ENCODE measurements at regions of chr15 and their contacts with region 1.

Region 1: DNA sequence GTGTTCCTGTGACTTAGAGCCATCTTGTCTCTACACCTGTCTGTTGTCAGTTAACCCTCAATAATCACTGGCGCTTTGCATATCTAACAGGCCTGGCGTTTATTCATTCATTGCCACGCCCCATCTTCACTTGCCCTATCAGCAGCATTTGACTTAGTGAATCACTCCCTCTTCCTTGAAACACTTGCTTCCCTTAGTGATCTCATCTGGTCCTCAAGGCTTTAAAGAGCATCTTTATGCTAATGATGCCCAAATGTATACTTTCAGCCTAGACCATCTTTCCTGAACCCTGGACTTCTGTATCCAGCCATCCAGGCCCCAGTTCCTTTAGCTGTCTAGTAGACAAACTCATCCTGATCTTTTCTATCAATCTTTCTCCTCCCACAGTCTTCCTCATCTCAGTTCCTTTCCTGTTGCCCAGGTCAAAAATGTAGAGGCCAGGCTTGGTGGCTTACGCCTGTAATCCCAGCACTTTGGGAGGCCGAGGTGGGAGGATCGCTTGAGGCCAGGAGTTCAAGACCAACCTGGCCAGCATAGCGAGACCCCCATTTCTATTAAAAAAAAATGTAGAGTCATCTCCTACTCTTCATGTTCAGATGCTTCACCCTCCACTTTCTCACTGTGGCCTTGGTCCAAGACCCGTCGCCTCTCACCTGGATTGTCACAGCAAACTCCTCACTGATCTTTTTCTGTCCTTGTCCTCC is 1.4 kb upstream of the IGDCC4 start:
- DNase-seq: no peak
- H3K4me3 ChIP-seq: no peak overlapping the region
- H3K27ac ChIP-seq: no peak overlapping the region
- H3K4me1 ChIP-seq: peaks cover 9% of the 10 kb centered on the region; the same call in 1 of the 2 replicates
- H3K27me3 ChIP-seq: peaks cover 4% of the 10 kb centered on the region; the same call in 1 of the 2 replicates
- CTCF ChIP-seq: no peak

Region 2: DNA sequence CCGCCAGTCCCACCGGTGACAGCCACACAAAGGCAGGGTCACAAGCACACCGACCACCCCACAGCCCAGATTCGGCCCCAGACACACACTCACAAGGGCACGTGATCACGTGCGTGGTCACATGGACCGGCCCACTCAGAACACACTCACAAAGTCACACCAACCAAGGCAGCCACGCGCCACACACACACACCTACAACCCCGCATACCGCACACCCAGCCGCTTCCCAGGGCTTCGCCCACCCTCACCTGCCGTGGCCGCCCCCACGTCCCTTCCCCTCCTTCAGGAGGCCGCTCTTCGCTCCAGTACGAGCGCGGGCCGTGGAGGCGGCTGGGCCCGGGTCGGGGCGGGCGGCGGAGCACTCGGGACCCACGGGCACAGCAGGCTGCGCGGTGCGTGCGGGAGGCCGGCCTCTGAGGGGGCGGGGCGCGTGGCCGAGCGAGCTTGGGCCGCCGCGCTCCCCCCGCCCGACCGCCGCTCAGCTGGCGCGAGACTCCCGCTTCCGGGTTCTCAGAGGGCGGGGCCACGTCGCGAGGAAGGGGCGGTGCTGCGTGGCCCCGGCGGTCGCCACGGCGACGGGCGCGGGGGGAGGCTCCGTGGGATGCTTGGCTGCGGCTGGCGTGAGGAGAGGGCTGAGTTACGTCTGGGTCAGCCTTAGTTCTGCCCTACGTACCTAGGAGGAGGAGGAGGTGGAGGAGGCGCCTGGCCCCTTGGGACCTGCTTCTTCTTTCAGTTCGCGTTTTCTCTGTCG is 434.5 kb before region 1 on chr15 and contains the start of gene SPG21:
- CTCF ChIA-PET with region 1: no interaction called
- POLR2A ChIA-PET with region 1: interaction called, 10 read pairs
- intact Hi-C with region 1: no loop called
- DNase-seq: peak; percentile 70 to 97
- H3K4me3 ChIP-seq: peak within 1 kb of the TSS; percentile 87
- H3K27ac ChIP-seq: peak within 1 kb of the TSS; percentile 63
- H3K4me1 ChIP-seq: peaks cover 10% of the 10 kb centered on the region; the same call in 1 of the 2 replicates
- H3K27me3 ChIP-seq: no peaks in the 10 kb centered on the region
- CTCF ChIP-seq: no peak
- total RNA-seq, gene SPG21: 88.3 and 91.7 TPM in 2 replicates

Region 3: DNA sequence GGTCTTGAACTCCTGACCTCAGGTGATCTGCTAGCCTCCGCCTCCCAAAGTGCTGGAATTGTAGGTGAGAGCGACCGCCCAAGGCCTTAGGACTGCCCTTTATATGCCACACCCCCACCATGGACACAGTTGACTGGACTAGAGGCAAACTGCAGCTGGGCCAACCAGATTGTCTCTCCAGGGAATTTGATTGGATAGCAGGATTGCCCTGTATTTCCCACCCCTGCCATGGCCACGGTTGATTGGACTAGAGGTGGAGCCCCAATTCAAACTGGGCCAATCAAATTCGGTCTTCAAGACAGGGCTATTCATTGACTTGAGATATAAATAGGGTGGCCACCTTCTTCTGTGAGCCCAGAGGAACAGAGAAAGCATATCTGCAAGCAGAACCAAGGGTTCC is 232.1 kb before region 1 on chr15:
- CTCF ChIA-PET with region 1: no interaction called
- POLR2A ChIA-PET with region 1: no interaction called
- intact Hi-C with region 1: no loop called
- DNase-seq: no peak
- H3K4me3 ChIP-seq: no peak overlapping the region
- H3K27ac ChIP-seq: no peak overlapping the region
- H3K4me1 ChIP-seq: no peaks in the 10 kb centered on the region
- H3K27me3 ChIP-seq: no peaks in the 10 kb centered on the region
- CTCF ChIP-seq: no peak

Region 4: GRCh38 chr15:65231306-65231705 is 192.8 kb before region 1 on chr15:
- CTCF ChIA-PET with region 1: interaction called, 11 read pairs
- POLR2A ChIA-PET with region 1: no interaction called
- intact Hi-C with region 1: no loop called
- DNase-seq: no peak
- H3K4me3 ChIP-seq: no peak overlapping the region
- H3K27ac ChIP-seq: no peak overlapping the region
- H3K4me1 ChIP-seq: no peaks in the 10 kb centered on the region
- H3K27me3 ChIP-seq: no peaks in the 10 kb centered on the region
- CTCF ChIP-seq: no peak

Region 5: DNA sequence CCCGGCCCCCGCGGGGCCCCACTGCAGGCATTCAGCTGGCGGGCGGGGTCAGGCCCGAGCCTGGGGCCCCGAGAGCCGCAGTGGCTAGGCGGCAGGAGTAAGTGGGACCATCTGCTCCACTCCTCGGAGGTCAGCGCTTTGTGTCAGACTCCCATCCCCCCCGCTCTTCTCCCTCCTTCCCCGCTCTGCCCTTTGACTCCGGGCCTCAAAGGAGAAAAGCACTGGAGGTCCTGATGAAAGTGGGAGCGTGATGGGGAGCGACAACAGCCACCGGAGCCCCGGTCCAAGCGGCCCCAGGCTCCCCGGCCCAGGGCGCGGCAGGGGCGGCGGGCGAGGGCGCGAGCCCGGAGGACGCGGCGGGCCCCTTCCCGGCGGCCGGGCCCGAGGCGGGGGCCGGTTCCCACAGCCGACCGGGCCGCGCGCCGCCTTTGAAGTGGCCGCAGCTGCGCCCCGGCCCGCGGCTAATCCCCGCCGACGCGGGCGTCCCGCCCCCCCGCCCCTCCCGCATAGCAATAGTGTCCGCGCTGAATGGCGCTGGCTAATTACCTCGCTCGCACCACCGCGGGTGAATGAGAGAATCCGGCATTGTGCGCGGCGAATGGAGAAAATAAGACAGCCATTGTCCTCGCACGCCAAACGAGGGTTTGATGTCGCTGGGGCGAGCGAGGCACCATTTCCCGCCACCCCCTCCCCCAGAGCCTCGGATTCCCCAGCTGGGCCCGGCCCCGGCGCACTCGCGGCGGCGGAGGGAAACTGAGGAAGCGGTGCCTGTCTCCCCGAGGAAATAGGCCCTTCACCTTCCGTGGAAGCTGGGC is 68.7 kb before region 1 on chr15:
- CTCF ChIA-PET with region 1: no interaction called
- POLR2A ChIA-PET with region 1: no interaction called
- intact Hi-C with region 1: no loop called
- DNase-seq: no peak
- H3K4me3 ChIP-seq: no peak overlapping the region
- H3K27ac ChIP-seq: no peak overlapping the region
- H3K4me1 ChIP-seq: no peaks in the 10 kb centered on the region
- H3K27me3 ChIP-seq: no peaks in the 10 kb centered on the region
- CTCF ChIP-seq: no peak

Region 6: DNA sequence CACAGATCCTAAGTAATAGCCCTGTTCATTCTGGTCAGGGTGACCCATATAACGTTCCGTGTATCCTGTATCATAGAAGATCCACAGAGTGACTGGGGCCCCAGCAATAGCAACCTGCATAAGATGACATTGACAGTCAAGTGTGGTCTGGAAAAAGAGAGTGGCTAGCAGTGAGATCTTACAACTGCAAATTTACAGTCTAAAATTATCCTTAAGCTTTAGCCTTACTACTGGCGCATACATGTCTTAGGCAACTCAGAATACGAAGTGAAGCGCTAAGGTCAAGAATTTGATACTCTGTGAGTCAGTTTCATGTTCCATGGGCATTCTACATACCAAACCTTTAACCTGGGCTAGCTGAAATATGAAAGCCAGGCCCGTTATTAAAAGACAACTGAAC is 27.9 kb after region 1 on chr15:
- CTCF ChIA-PET with region 1: no interaction called
- POLR2A ChIA-PET with region 1: interaction called, 14 read pairs
- intact Hi-C with region 1: no loop called
- DNase-seq: no peak
- H3K4me3 ChIP-seq: no peak overlapping the region
- H3K27ac ChIP-seq: no peak overlapping the region
- H3K4me1 ChIP-seq: no peaks in the 10 kb centered on the region
- H3K27me3 ChIP-seq: no peaks in the 10 kb centered on the region
- CTCF ChIP-seq: no peak

Region 7: DNA sequence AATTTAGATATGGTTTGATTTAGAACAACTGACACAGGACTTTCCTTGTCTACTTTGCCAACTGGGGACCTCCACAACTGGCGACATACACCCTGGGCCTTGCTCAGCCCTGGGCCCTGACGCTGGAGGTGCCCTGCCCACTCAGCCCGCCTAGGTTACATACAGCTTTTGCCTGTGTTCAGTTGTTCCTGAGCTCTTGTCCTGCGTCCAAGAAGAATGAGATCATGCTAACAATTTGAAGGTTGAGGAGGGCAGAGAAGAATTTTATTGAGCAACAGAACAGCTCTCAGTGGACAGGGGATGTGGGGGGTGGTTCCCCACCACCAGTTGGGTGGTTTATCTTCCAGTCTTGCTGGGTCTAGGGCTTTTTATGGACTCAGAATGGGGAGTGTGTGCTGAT is 1898.4 kb after region 1 on chr15:
- CTCF ChIA-PET with region 1: no interaction called
- POLR2A ChIA-PET with region 1: interaction called, 10 read pairs
- intact Hi-C with region 1: no loop called
- DNase-seq: no peak
- H3K4me3 ChIP-seq: no peak overlapping the region
- H3K27ac ChIP-seq: no peak overlapping the region
- H3K4me1 ChIP-seq: no peaks in the 10 kb centered on the region
- H3K27me3 ChIP-seq: no peaks in the 10 kb centered on the region
- CTCF ChIP-seq: no peak

Measured in PC-9 (cell line).